ENCODE measurements at regions of chr2 and their contacts with region 1.

Region 1: GRCh38 chr2:161004379-161004778 is 155.8 kb upstream of the TANK start:
- DNase-seq: no peak
- H3K4me3 ChIP-seq: no peak overlapping the region
- H3K27ac ChIP-seq: no peak overlapping the region
- H3K4me1 ChIP-seq: no peaks in the 10 kb centered on the region
- H3K27me3 ChIP-seq: no peaks in the 10 kb centered on the region
- CTCF ChIP-seq: peak in 1 of 4 experiments; percentile 31
- POLR2A ChIP-seq: no peak

Region 2: DNA sequence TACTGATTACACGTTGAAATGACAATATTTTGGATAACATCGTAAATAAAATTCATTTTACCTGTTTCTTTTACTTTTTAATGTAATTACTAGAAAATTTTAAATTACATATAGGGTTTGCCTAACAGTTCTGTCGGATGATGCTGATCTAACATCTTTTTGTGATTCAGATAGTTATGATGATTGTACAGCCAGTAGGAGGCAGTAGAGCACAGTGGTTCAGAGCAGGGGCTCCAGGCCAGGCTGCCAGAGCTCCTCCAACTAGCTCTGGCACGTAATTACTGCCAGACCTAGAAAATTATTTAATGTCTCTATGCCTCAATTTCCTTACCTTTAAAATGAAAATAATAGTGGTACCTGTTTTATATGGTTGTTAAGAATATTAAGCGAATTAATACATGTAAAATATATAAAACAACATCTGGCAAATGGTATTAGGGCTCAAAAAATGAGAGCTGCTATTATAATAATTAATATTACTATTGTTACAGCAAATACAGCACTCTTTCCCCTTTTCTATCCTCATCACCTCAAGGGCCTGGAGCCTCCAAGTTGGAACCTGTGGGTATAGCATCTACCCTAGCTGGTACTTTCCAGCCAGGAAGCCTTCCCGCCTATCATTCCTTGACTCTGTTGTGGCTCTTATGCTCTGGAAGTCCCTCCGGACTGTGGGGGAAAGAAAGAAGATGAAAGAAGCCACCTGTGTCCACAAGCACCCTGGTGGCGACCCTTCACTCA is 894.3 kb before region 1 on chr2:
- intact Hi-C with region 1: loop called (anchors 10 kb)
- DNase-seq: peak; percentile 61 to 75
- H3K4me3 ChIP-seq: no peak overlapping the region
- H3K27ac ChIP-seq: no peak overlapping the region
- H3K4me1 ChIP-seq: no peaks in the 10 kb centered on the region
- H3K27me3 ChIP-seq: no peaks in the 10 kb centered on the region
- CTCF ChIP-seq: peak; percentile 79 to 90 (median 82)
- POLR2A ChIP-seq: no peak

Region 3: GRCh38 chr2:161265874-161266273 is 261.5 kb after region 1 on chr2:
- intact Hi-C with region 1: no loop called
- DNase-seq: no peak
- H3K4me3 ChIP-seq: no peak overlapping the region
- H3K27ac ChIP-seq: no peak overlapping the region
- H3K4me1 ChIP-seq: no peaks in the 10 kb centered on the region
- H3K27me3 ChIP-seq: peaks cover 0 to 4% of the 10 kb centered on the region in 2 donors
- CTCF ChIP-seq: no peak
- POLR2A ChIP-seq: no peak

Measured in uterus (tissue), 4 donors.